ENCODE measurements at regions of chr17 and their contacts with region 1.

Region 1: GRCh38 chr17:60720763-60721531 is 43.3 kb downstream of the BCAS3 start:
- DNase-seq: peak; percentile 63 to 74
- ATAC-seq: peak; percentile 73 to 87; a peak in 5 of 6 replicates
- H3K4me3 ChIP-seq: no peak overlapping the region
- H3K27ac ChIP-seq: no peak overlapping the region
- H3K4me1 ChIP-seq: peaks cover 3% of the 10 kb centered on the region; the same call in 1 of the 3 replicates
- CTCF ChIP-seq: peak; percentile 99
- EP300 ChIP-seq: no peak
- POLR2A ChIP-seq: no peak
- RAD21 ChIP-seq: peak; percentile 96 to 97

Region 2: DNA sequence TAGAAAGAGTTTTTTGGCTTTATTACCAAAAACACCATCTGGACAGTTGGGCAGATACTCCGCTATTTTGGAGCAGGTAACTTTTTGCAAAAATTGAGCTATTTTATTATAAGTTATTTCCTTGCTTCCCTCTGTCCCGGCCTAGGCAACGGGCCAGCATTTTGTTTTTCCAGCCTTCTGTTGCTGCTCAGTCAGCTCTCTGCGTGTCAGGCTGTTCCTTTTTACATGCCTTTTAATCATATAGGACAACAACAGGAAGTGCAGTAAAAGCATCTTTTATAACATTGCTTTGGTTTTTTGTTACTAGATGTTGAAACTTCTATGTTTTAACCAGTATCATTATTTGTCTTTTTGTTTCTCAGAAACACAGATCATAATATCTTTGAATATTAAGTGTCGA is 90.6 kb before region 1 on chr17:
- CTCF ChIA-PET with region 1: no interaction called
- POLR2A ChIA-PET with region 1: no interaction called
- DNase-seq: no peak
- ATAC-seq: no peak
- H3K4me3 ChIP-seq: no peak overlapping the region
- H3K27ac ChIP-seq: no peak overlapping the region
- H3K4me1 ChIP-seq: peaks cover 7% of the 10 kb centered on the region; the same call in 2 of the 3 replicates
- CTCF ChIP-seq: no peak
- EP300 ChIP-seq: no peak
- POLR2A ChIP-seq: no peak
- RAD21 ChIP-seq: no peak

Region 3: DNA sequence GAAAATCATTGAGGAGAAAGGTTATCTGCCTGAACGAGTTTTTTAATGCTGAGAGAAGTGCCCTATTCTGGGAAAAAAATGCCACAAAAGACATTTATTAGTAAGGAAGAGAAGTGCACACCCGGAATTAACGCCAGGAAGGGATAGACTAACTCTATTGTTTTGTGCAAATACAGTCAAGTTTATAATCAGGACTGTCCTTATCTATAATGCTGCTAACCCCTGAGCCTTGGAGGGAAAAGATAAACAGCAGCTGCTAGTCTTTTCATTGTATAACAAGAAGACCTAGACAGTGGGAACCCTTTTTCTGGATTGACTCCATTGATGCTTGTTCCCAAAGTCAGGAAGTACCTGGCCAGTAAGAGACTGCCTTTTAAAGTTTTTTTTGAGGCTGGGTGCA is 16.8 kb before region 1 on chr17:
- CTCF ChIA-PET with region 1: interaction called, 30 read pairs
- POLR2A ChIA-PET with region 1: no interaction called
- DNase-seq: no peak
- ATAC-seq: no peak
- H3K4me3 ChIP-seq: no peak overlapping the region
- H3K27ac ChIP-seq: no peak overlapping the region
- H3K4me1 ChIP-seq: no peaks in the 10 kb centered on the region
- CTCF ChIP-seq: no peak
- EP300 ChIP-seq: no peak
- POLR2A ChIP-seq: no peak
- RAD21 ChIP-seq: no peak

Region 4: DNA sequence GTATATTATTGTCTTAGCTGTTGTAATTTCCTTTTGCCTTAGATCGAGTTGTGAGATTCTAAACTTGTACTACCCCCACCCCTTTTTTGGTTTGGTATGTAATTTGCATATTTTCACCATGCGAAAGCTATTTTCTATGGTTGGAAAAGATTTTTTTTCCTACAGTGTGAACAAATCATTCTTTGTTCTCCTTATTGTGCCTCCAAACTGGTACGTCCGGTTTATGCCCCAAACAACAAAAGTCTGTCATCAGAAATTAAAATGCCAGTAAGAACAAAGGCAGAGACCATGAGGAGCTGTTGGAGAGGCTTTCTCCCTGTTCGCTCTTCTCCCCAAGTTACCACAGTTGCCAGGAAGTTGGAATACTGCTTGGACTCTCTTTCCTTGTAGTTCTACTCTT is 22.9 kb after region 1 on chr17:
- CTCF ChIA-PET with region 1: interaction called, 27 read pairs
- POLR2A ChIA-PET with region 1: no interaction called
- DNase-seq: no peak
- ATAC-seq: no peak
- H3K4me3 ChIP-seq: no peak overlapping the region
- H3K27ac ChIP-seq: no peak overlapping the region
- H3K4me1 ChIP-seq: no peaks in the 10 kb centered on the region
- CTCF ChIP-seq: no peak
- EP300 ChIP-seq: no peak
- POLR2A ChIP-seq: no peak
- RAD21 ChIP-seq: no peak

Region 5: DNA sequence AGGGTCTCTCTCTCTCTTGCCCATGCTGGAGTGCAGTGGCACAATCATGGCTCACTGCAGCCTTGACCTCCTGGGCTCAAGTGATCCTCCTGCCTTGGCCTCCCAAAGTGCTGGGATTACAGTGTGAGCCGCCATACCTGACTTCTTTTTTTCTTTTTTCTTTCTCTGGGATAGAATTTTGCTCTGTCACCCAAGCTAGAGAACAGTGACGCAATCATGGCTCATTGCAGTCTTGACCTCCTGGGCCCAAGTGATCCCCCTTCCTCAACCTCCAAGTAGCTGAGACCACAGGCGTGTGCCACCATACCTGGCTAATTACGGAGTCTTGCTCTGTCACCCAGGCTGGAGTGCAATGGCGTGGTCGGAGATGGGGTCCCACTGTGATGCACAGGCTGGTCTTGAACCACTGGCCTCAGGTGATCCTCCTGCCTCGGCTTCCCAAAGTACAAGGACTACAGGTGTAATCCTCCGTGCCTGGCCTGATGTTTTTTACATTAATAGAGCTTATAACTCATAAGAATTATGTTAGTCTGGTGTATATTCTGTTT is 33.2 kb after region 1 on chr17:
- CTCF ChIA-PET with region 1: no interaction called
- POLR2A ChIA-PET with region 1: no interaction called
- DNase-seq: no peak
- ATAC-seq: no peak
- H3K4me3 ChIP-seq: no peak overlapping the region
- H3K27ac ChIP-seq: no peak overlapping the region
- H3K4me1 ChIP-seq: no peaks in the 10 kb centered on the region
- CTCF ChIP-seq: no peak
- EP300 ChIP-seq: no peak
- POLR2A ChIP-seq: no peak
- RAD21 ChIP-seq: no peak

Region 6: DNA sequence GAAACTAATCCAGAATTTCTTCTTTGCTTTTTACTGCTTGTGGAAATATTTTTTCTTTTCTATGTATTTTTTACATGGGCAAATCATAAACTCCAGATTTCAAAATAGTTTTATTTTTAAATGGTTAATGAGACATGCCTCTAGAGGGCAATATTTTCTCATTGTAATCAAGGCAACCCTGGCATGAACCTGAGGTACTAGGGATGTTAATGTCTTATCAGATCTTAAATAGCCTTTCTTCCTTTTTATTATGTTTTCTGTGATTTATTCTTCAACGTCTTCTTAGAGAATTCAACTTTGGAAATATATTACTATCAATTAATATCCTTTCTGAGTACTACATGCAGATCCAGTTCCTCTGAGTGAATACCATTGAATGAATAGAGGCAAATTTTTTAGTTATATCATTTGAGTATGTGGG is 281.4 kb after region 1 on chr17:
- CTCF ChIA-PET with region 1: interaction called, 12 read pairs
- POLR2A ChIA-PET with region 1: no interaction called
- DNase-seq: peak; percentile 7 to 63
- ATAC-seq: peak in 1 of 2 experiments; percentile 64; a peak in 3 of 6 replicates
- H3K4me3 ChIP-seq: no peak overlapping the region
- H3K27ac ChIP-seq: no peak overlapping the region
- H3K4me1 ChIP-seq: peaks cover 7% of the 10 kb centered on the region; the same call in 2 of the 3 replicates
- CTCF ChIP-seq: peak; percentile 91
- EP300 ChIP-seq: no peak
- POLR2A ChIP-seq: no peak
- RAD21 ChIP-seq: peak; percentile 91 to 95

Region 7: GRCh38 chr17:61361084-61361483 is 640.1 kb after region 1 on chr17:
- CTCF ChIA-PET with region 1: interaction called, 10 read pairs
- POLR2A ChIA-PET with region 1: no interaction called
- DNase-seq: no peak
- ATAC-seq: no peak
- H3K4me3 ChIP-seq: no peak overlapping the region
- H3K27ac ChIP-seq: peak overlapping the region; percentile 58 to 60; a peak in 4 of 6 replicates
- H3K4me1 ChIP-seq: peaks cover 42% of the 10 kb centered on the region
- CTCF ChIP-seq: no peak
- EP300 ChIP-seq: no peak
- POLR2A ChIP-seq: no peak
- RAD21 ChIP-seq: no peak

Measured in A549 (cell line).